A673 (cell line): ENCODE measurements at regions of chr12 and their contacts with region 1.

Region 1: DNA sequence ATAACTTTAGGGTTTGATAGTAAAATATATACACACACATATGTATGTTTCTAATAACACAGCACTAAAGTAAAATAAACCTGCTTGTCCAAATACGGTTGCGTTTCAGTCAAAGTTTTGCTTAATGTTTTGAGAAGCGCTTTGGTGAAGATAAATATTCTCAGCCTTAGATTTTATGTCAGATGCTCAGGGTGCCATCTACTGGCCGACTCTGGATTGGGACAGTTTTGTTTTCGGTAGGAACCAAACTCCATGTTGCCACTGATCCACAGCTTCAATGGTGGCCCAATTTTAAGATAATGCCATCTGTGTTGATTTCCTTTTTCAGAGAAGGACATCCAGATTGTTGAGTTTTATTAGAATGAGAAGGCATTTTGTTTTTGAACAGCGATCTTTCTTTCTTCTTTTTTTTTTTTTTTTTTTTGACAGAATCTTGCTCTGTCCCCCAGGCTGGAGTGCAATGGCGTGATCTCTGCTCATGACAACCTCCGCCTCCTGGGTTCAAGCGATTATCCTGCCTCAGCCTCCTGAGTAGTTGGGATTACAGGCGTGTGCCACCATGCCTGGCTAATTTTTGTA is 43.1 kb downstream of the LLPH start:
- DNase-seq: peak; percentile 88
- H3K4me3 ChIP-seq: no peak overlapping the region
- H3K27ac ChIP-seq: peak overlapping the region; percentile 42
- H3K4me1 ChIP-seq: peaks cover 26% of the 10 kb centered on the region
- H3K27me3 ChIP-seq: no peaks in the 10 kb centered on the region
- CTCF ChIP-seq: peak; percentile 91

Region 2: GRCh38 chr12:66028388-66028787 is 59.1 kb before region 1 on chr12:
- CTCF ChIA-PET with region 1: no interaction called
- POLR2A ChIA-PET with region 1: no interaction called
- intact Hi-C with region 1: loop called (anchors 2 kb)
- DNase-seq: no peak
- H3K4me3 ChIP-seq: no peak overlapping the region
- H3K27ac ChIP-seq: no peak overlapping the region
- H3K4me1 ChIP-seq: peaks cover 17% of the 10 kb centered on the region
- H3K27me3 ChIP-seq: no peaks in the 10 kb centered on the region
- CTCF ChIP-seq: no peak